ENCODE measurements at regions of chr4 and their contacts with region 1.

Region 1: DNA sequence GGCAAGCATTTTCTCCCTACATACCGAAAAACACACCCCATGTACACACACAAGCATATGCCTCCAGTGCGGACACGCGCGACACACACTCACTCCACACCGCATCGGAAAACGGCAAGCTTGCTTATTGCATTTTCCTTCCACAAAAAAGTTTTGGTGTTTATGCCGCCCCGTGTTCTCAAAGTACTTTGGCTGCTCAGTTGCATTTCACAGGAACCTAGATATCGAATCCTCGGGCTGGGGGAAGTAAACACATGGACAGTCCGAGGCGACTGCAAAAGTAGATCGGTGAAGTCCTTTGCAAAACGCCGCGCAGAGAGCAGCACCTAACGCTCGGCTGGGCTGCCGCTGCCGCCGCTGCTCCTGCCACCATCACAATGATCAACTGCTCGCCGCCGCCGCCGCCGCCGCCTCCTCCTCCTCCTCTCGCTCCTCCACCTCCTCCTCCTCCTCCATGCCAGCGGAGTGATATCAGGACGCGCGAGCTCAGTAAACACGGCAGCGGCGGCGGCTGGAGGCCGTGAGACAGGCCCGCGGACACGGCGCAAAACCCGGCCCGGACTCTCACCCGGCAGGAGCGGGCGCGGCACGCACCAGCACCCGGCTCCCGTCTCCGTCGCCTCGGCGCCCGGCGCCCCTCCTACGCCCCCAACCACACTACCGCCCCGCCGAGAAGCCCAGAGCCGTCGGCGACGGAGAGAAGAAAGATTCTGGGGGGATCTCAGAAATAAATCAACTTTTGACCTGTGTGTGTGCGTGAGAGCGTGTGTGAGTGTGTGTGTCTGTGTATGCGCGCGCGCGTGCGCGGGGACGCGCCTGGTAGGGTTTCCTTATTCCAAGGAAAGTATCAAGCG is at the start of gene MAML3:
- DNase-seq: peak; percentile 95
- H3K4me3 ChIP-seq: peak within 1 kb of the TSS; percentile 64 to 91 (median 67)
- H3K27ac ChIP-seq: peak within 1 kb of the TSS; percentile 99
- H3K4me1 ChIP-seq: peaks cover 10% of the 10 kb centered on the region
- H3K27me3 ChIP-seq: no peaks in the 10 kb centered on the region
- CTCF ChIP-seq: no peak
- POLR2A ChIP-seq: peak; percentile 53
- total RNA-seq, gene MAML3: 20.1 and 20.3 TPM in 2 replicates

Region 2: DNA sequence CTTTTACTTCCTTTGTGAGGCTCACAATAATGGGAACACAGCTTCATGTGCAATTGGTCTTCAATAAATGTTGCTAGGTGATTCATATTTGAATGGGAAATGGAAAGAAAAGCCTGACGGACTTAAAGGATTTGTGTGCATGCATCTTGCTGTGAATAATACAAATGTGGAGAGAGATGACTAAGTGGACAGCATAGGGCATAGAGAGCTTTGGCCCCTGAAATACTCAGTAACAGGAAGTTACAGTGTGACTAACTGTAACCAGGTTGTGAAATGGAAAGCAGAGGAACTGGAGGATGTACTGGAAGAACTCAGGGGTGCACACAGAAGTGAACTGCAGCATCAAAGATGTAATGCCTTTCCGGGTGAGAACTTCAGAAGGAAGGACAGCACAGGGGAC is 281.7 kb before region 1 on chr4:
- CTCF ChIA-PET with region 1: interaction called, 3 read pairs
- POLR2A ChIA-PET with region 1: no interaction called
- dilution Hi-C with region 1: no loop called
- intact Hi-C with region 1: loop called (anchors 1 kb)
- DNase-seq: peak; percentile 93
- H3K4me3 ChIP-seq: no peak overlapping the region
- H3K27ac ChIP-seq: peak overlapping the region; percentile 56
- H3K4me1 ChIP-seq: peaks cover 16% of the 10 kb centered on the region
- H3K27me3 ChIP-seq: no peaks in the 10 kb centered on the region
- CTCF ChIP-seq: no peak
- POLR2A ChIP-seq: no peak

Region 3: DNA sequence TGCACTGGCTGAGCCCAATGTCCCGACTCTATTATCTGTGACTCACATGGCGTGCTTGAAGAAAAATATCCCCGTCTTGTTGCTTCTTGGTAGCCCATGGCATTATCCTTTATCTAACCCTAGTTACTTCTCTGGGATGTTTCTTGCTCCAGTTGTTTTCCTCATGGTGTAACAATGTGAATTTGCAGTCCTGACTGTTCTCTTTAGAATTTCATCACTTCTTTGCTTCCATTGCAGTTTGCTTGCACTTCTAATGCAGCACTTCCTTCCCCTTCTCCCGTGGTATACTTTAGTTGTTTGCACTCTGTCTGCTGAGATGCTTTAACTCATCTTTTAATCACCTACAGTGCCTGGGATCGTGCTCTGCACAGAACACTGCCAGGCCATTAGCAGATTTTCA is 126.8 kb before region 1 on chr4:
- CTCF ChIA-PET with region 1: no interaction called
- POLR2A ChIA-PET with region 1: no interaction called
- dilution Hi-C with region 1: no loop called
- intact Hi-C with region 1: no loop called
- DNase-seq: no peak
- H3K4me3 ChIP-seq: no peak overlapping the region
- H3K27ac ChIP-seq: no peak overlapping the region
- H3K4me1 ChIP-seq: peaks cover 5% of the 10 kb centered on the region
- H3K27me3 ChIP-seq: no peaks in the 10 kb centered on the region
- CTCF ChIP-seq: no peak
- POLR2A ChIP-seq: no peak

Region 4: DNA sequence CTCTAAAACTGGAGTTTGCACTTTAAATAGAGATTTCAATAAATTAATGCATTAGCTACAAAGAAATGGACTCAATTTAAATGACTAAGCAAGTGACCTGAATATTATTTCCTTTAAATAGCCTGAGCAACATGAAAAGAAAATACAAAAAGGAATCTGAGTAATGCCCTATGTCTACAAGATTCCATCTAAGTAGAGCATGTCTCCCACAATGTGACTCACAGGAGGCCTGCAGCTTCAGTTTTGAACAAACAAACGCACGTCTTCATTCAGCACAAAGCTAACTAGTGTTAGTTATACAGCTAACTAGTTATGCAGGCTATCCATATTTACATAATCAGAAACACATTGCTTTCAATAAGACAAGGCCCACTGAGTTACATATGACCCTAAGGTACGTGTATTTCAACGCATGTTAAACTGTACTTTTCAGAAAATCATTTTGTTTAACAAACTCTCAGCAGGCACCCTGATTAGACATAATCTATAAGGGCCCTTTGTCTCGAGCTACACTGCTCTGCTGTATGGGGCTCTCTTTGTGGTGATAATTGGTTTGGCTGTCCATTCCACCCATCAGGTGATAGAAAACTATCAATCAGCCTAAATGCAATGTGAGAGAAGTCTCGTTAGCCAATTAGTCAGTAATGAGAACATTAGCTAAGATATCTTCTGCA is 116.5 kb before region 1 on chr4:
- CTCF ChIA-PET with region 1: no interaction called
- POLR2A ChIA-PET with region 1: interaction called, 3 read pairs
- dilution Hi-C with region 1: no loop called
- intact Hi-C with region 1: loop called (anchors 1 kb)
- DNase-seq: peak; percentile 93
- H3K4me3 ChIP-seq: peak overlapping the region in 1 of 3 experiments; percentile 45
- H3K27ac ChIP-seq: peak overlapping the region; percentile 99
- H3K4me1 ChIP-seq: peaks cover 29% of the 10 kb centered on the region
- H3K27me3 ChIP-seq: no peaks in the 10 kb centered on the region
- CTCF ChIP-seq: no peak
- POLR2A ChIP-seq: peak; percentile 41

Region 5: DNA sequence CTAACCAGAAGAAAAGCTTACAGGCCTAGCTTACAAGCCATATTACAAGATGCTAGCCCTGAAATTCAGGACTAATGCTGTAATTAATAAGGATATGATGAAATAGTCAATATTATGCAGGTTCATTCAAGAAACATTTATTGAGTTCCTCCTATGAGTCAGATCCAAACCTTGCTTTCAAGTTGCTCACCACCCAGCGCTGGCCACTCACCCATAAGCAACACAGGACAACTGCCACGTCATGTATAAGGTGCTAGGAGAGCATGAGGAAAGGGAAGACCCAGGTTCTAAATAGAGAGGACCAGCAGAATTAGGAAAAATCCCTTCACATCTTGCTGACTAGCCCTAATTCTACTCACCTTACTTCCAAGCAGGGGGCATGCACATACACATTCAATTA is 23.3 kb before region 1 on chr4:
- CTCF ChIA-PET with region 1: no interaction called
- POLR2A ChIA-PET with region 1: no interaction called
- dilution Hi-C with region 1: no loop called
- intact Hi-C with region 1: loop called (anchors 1 kb)
- DNase-seq: no peak
- H3K4me3 ChIP-seq: no peak overlapping the region
- H3K27ac ChIP-seq: no peak overlapping the region
- H3K4me1 ChIP-seq: peaks cover 8% of the 10 kb centered on the region
- H3K27me3 ChIP-seq: no peaks in the 10 kb centered on the region
- CTCF ChIP-seq: no peak
- POLR2A ChIP-seq: no peak

Region 6: DNA sequence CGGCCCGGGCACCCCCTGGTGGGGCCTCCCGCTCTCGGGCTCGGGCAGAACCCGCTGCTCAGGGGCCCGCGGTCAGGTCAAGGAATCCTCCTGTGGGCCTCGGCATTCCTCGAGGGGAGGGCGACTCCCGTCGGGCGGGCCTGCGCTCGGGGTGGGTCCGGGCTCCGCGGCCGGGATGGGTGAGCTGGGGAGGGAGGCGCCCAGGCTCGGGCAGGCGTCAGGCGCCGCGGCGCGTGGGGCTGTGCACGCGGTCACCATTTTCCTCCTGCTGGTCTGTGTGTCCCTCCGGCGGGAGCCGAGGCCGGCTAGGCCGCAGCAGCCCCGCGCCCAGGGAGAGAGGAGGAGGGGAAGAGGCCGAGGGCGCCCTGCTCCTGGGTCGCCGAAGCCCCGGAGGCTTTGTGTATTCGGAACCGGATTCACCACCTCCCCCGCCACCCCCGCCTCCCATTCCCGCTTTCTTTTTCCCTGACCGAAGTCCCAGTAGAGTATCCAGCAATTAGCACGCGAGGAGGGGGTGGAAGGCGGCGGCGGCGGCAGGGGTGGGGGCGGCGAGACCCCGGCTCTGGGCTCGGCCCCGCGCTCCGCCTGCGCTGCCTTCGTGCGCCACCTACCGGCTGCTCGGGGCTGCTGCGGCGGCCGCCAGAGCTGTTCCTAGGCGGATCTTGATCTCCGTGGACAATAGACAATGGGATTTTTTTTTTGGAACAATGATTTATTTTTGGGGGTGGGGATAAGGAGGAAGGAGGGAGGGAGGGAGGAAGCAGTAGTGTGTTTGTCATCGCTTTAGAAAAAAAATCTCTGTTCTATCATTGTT is 99.0 kb after region 1 on chr4:
- CTCF ChIA-PET with region 1: interaction called, 65 read pairs
- POLR2A ChIA-PET with region 1: interaction called, 7 read pairs
- dilution Hi-C with region 1: no loop called
- intact Hi-C with region 1: loop called (anchors 1 kb)
- DNase-seq: peak; percentile 93
- H3K4me3 ChIP-seq: peak overlapping the region in 1 of 3 experiments; percentile 37
- H3K27ac ChIP-seq: peak overlapping the region; percentile 78
- H3K4me1 ChIP-seq: peaks cover 60% of the 10 kb centered on the region
- H3K27me3 ChIP-seq: no peaks in the 10 kb centered on the region
- CTCF ChIP-seq: peak; percentile 83 to 91
- POLR2A ChIP-seq: no peak